Tibial artery (tissue), 4 donors: ENCODE measurements at regions of chr13 and their contacts with region 1.

Region 1: DNA sequence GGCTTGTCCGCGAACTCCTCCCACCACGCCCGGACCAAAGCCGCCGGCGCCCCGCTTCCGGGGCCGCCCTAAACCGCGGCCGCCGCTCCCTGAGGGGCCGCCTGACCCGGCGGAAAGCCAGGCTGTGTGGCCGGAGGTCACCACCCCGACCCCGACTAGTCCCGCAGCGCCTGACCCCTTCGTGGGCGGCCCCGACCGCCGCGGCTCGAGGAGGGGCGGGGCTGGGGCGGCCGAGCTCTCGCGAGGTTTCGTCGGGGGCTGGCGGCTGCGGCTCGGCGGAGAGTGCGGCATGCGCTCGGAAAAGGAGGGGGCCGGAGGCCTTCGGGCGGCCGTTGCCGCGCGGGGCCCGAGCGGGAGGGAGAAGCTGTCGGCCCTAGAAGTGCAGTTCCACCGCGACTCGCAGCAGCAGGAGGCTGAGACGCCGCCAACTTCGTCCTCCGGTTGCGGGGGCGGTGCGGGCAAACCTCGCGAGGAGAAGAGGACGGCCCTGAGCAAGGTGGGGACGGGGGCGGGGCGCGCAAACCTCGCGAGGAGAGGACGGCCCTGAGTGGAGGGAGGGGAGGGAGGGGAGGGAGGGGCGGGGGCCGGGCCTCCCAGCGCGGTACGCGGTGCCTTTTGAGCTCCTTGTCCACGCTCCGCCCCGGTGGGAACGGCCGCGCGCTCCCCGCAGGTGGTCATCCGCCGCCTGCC is at the start of gene UPF3A:
- DNase-seq: peak; percentile 89 to 95
- H3K4me3 ChIP-seq: peak within 1 kb of the TSS; percentile 64 to 74
- H3K27ac ChIP-seq: peak within 1 kb of the TSS; percentile 95 to 97
- H3K4me1 ChIP-seq: peaks cover 0 to 28% (median 20%) of the 10 kb centered on the region in 4 donors
- H3K27me3 ChIP-seq: no peaks in the 10 kb centered on the region
- CTCF ChIP-seq: peak in 1 of 2 experiments; percentile 4

Region 2: GRCh38 chr13:114234645-114235421 is 46.7 kb before region 1 on chr13 and contains the start of gene CDC16:
- intact Hi-C with region 1: loop called (anchors 2 kb)
- DNase-seq: peak; percentile 93 to 96
- H3K4me3 ChIP-seq: peak within 1 kb of the TSS; percentile 72 to 94
- H3K27ac ChIP-seq: peak within 1 kb of the TSS; percentile 76 to 88
- H3K4me1 ChIP-seq: peaks cover 0 to 20% (median 7%) of the 10 kb centered on the region in 4 donors
- H3K27me3 ChIP-seq: no peaks in the 10 kb centered on the region
- CTCF ChIP-seq: peak in 1 of 2 experiments; percentile 19